PC-9 (cell line): ENCODE measurements at regions of chr10 and their contacts with region 1.

Region 1: GRCh38 chr10:13371897-13372470 is 23.9 kb upstream of the SEPHS1 start:
- DNase-seq: peak; percentile 41 to 66
- H3K4me3 ChIP-seq: no peak overlapping the region
- H3K27ac ChIP-seq: no peak overlapping the region
- H3K4me1 ChIP-seq: no peaks in the 10 kb centered on the region
- H3K27me3 ChIP-seq: no peaks in the 10 kb centered on the region
- CTCF ChIP-seq: peak; percentile 84

Region 2: DNA sequence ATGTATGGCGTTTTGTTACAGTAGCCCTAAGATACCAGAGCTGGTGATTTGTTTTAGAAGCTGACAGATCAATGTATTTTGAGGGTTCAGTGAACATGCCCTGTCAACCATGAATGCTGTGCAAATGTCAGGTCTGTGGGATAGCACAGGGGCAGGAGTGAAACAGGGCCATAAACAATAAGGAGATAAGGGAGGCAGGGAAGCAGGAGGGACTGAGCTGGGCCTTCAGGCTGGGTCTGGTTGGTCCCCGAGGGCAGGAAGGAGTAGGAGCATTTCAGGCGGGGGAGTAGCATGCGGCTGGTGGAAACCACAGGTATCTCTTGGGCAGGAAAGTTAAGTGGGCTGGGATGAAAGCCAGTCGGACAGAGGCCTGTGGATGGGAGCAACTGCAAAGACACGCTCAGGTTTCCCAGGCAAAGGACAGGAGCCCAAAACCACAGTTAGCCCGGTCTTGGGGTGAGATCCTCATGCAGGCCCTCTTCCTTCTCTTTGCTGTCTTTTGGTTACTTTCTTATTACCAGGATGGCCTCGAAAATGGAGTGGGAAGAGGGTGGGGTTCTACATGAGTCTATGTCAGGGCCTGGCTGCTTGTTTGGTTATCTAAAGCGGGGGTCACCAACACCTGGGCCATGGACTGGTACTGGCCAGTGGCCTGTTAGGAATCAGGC is 45.6 kb after region 1 on chr10:
- CTCF ChIA-PET with region 1: no interaction called
- POLR2A ChIA-PET with region 1: no interaction called
- intact Hi-C with region 1: no loop called
- DNase-seq: no peak
- H3K4me3 ChIP-seq: no peak overlapping the region
- H3K27ac ChIP-seq: no peak overlapping the region
- H3K4me1 ChIP-seq: no peaks in the 10 kb centered on the region
- H3K27me3 ChIP-seq: peaks cover 34% of the 10 kb centered on the region
- CTCF ChIP-seq: no peak

Region 3: DNA sequence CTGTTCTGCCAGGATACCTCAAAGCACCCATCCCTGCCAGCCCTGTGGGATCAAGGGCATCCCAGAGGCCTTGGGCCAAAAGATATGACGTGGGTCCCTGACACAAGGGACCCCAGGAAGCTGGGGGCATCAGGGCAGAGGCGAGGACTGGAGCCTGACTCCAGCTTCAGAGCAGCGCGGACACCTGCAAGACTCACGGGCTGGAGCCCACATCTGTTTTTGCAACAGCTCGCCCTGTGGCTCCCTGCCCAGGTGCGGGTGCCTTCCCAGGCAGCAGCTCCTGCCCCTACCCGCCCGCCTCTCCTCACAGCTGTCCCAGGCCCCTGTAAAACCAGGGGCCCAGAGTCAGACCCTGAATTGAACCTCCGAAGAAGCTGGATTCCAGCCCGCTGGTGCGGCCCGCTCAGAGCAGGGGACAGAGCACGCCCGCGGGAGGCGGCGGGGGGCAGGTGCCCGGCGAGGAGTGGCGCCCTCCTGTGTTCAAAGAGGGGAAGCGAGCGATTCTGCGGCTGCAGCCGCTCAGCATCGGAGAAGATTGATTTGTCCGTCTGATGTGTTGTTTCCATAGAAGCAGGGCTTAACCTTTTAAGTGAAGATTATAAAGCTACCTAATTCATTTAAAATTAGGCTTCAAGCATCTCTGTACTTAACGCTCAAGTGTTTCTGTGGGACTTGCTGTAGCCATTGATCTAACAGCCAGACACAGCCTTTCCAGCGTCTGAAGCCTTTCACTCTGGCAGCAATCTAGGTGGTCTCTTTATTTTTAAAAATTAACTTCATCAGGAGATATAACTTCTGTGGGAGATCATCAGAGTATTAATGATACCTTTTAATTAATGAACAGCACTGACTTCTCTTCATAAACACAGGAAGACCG is 68.4 kb after region 1 on chr10:
- CTCF ChIA-PET with region 1: interaction called, 11 read pairs
- POLR2A ChIA-PET with region 1: no interaction called
- intact Hi-C with region 1: loop called (anchors 1 kb)
- DNase-seq: peak in 1 of 2 experiments; percentile 48
- H3K4me3 ChIP-seq: no peak overlapping the region
- H3K27ac ChIP-seq: no peak overlapping the region
- H3K4me1 ChIP-seq: no peaks in the 10 kb centered on the region
- H3K27me3 ChIP-seq: peaks cover 90% of the 10 kb centered on the region
- CTCF ChIP-seq: peak; percentile 69

Region 4: DNA sequence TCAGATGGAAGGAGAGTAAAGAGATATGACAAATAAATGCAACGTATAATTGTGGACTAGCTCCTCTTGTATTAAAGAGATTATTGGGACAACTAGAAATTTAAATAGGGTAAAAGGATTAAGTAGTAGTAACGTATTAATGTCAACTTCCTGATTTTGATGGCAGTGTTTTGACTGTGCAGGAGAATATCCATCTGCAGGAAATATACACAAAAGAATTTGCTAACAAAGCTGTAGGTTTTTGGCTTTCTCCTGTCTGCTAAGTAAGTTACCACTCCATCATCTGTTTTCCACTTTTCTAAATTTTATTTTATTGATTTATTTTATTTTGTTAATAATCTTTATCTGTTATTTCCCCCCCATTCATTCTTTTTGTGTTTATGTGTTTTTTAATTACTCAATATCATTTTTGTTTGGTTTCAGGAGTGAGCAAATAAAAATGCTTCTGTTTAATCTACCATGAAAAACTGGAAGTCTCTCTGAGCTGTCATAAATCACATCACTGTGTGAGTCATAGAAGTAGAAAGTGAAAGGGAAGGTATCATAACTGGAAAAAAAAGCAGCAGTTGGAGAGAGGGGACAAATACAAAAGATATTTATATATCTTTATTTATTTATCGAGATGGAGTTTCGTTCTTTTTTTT is 184.8 kb after region 1 on chr10:
- CTCF ChIA-PET with region 1: no interaction called
- POLR2A ChIA-PET with region 1: interaction called, 27 read pairs
- intact Hi-C with region 1: no loop called
- DNase-seq: peak in 1 of 2 experiments; percentile 71
- H3K4me3 ChIP-seq: no peak overlapping the region
- H3K27ac ChIP-seq: no peak overlapping the region
- H3K4me1 ChIP-seq: 0 out of 2 replicates have a peak, but pooled peaks cover 7% of the 10 kb centered on the region
- H3K27me3 ChIP-seq: peaks cover 45% of the 10 kb centered on the region
- CTCF ChIP-seq: no peak

Region 5: DNA sequence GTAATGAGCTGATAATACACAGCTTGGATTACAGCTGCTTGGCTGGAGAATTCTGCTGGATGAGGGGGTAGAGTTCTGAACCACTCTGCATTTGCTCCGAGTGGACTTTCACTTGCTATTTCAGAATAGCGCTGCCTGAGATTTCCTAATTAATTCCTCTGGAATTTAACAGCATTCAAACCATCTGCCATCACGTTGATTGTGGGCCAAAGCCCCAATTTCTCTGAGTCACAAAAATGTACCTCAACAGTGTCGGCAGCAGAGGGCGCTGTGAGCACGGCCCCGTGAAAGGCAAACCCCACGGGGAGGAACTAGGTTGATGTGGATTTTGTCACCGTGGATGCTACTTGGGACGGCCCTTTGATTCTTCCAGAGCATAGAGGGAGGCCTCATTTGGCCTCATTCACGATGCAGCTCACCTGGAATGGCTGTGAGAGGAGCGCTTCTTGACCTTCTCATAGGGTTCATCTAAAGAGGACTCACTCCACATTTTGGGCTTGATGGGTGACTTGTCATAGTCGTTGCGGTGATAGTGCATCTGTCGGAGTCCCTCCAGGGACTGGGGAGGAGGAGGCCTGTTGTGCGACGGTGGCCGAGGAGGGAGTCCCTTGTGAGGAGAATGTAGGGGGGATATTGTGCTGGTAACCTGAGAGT is 288.0 kb after region 1 on chr10:
- CTCF ChIA-PET with region 1: no interaction called
- POLR2A ChIA-PET with region 1: no interaction called
- intact Hi-C with region 1: loop called (anchors 2 kb)
- DNase-seq: peak in 1 of 2 experiments; percentile 38
- H3K4me3 ChIP-seq: no peak overlapping the region
- H3K27ac ChIP-seq: no peak overlapping the region
- H3K4me1 ChIP-seq: no peaks in the 10 kb centered on the region
- H3K27me3 ChIP-seq: no peaks in the 10 kb centered on the region
- CTCF ChIP-seq: peak; percentile 91